SK-N-SH (cell line): ENCODE measurements at regions of chr3 and their contacts with region 1.

Region 1: GRCh38 chr3:71734883-71735282 is 9.7 kb upstream of the EIF4E3 start:
- DNase-seq: no peak
- H3K4me3 ChIP-seq: no peak overlapping the region
- H3K27ac ChIP-seq: no peak overlapping the region
- H3K4me1 ChIP-seq: peaks cover 0 to 2% of the 10 kb centered on the region in 2 experiments; a peak in 1 of 4 replicates
- H3K27me3 ChIP-seq: no peaks in the 10 kb centered on the region
- CTCF ChIP-seq: no peak
- EP300 ChIP-seq: no peak
- RAD21 ChIP-seq: no peak

Region 2: GRCh38 chr3:71859123-71859519 is 124.2 kb after region 1 on chr3:
- CTCF ChIA-PET with region 1: interaction called, 72 read pairs
- POLR2A ChIA-PET with region 1: no interaction called
- DNase-seq: peak; percentile 55
- H3K4me3 ChIP-seq: no peak overlapping the region
- H3K27ac ChIP-seq: peak overlapping the region in 1 of 2 experiments; percentile 94; a peak in 2 of 4 replicates
- H3K4me1 ChIP-seq: peaks cover 0 to 15% of the 10 kb centered on the region in 2 experiments; a peak in 2 of 4 replicates
- H3K27me3 ChIP-seq: no peaks in the 10 kb centered on the region; the same call in 1 of the 2 replicates
- CTCF ChIP-seq: peak; percentile 38
- EP300 ChIP-seq: no peak
- RAD21 ChIP-seq: peak; percentile 86